CD4-positive, alpha-beta memory T cell (primary cell): ENCODE measurements at regions of chr11 and their contacts with region 1.

Region 1: GRCh38 chr11:128482512-128483191 is 104.7 kb downstream of the ETS1 start:
- DNase-seq: peak; percentile 68 to 88 (median 72)
- H3K4me3 ChIP-seq: peak overlapping the region; percentile 27 to 47
- H3K4me3 Mint-ChIP-seq: peak overlapping the region; percentile 73 to 92 (median 81)
- H3K27ac ChIP-seq: peak overlapping the region; percentile 94
- H3K27ac Mint-ChIP-seq: peak overlapping the region; percentile 88 to 99 (median 99)
- H3K4me1 ChIP-seq: peaks cover 99% of the 10 kb centered on the region
- H3K4me1 Mint-ChIP-seq: peaks cover 86 to 98% (median 93%) of the 10 kb centered on the region in 4 donors
- H3K27me3 ChIP-seq: no peaks in the 10 kb centered on the region
- H3K27me3 Mint-ChIP-seq: no peaks in the 10 kb centered on the region

Region 2: GRCh38 chr11:128463371-128463829 is 19.3 kb before region 1 on chr11:
- CTCF ChIA-PET with region 1: interaction called, 50 read pairs
- POLR2A ChIA-PET with region 1: interaction called, 662 read pairs
- intact Hi-C with region 1: loop called (anchors 2 kb)
- DNase-seq: no peak
- H3K4me3 ChIP-seq: peak overlapping the region in 1 of 2 donors; percentile 3
- H3K4me3 Mint-ChIP-seq: peak overlapping the region; percentile 26 to 93 (median 78)
- H3K27ac ChIP-seq: peak overlapping the region; percentile 94
- H3K27ac Mint-ChIP-seq: peak overlapping the region; percentile 98 to 99 (median 99)
- H3K4me1 ChIP-seq: peaks cover 93% of the 10 kb centered on the region
- H3K4me1 Mint-ChIP-seq: peaks cover 76 to 95% (median 86%) of the 10 kb centered on the region in 4 donors
- H3K27me3 ChIP-seq: no peaks in the 10 kb centered on the region
- H3K27me3 Mint-ChIP-seq: no peaks in the 10 kb centered on the region

Region 3: DNA sequence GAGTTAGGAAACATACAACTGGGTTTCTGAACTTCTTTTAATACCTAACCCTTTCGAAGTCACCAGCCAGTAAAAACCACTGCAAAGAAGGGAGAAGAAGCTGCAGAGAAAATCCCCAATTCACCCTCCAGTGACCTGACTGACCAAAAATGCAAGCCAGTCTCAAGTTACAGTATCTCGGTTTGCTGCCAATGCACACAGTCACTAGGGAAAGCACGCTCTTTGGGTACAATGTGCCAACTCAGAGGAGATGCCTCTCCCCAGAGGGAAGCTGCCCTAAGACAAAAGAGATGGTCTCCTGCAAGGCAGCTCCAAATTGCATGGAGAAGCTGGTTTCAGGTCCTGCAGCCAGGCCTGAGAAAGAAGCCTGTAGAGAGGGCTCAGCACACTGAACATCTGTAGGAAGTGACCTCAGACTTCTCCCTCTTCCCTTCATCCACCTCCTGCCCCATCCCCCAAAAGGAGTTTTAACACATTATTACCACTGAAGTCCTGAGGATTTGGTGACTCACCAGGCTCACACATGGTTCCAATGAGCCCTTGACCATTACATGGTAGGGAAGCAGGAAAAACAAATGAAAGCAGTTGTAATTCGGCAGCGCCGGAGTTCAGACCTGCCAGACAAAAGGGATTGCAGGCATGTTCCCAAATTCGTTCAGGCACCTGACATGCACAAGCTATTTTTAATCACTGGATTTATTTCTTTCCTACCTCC is 14.6 kb after region 1 on chr11:
- CTCF ChIA-PET with region 1: interaction called, 8 read pairs
- POLR2A ChIA-PET with region 1: interaction called, 1,488 read pairs
- intact Hi-C with region 1: loop called (anchors 1 kb)
- DNase-seq: peak in 1 of 5 donors; percentile 65
- H3K4me3 ChIP-seq: peak overlapping the region; percentile 5 to 47
- H3K4me3 Mint-ChIP-seq: peak overlapping the region; percentile 78 to 97 (median 88)
- H3K27ac ChIP-seq: peak overlapping the region; percentile 89
- H3K27ac Mint-ChIP-seq: peak overlapping the region; percentile 82 to 99 (median 97)
- H3K4me1 ChIP-seq: peaks cover 99% of the 10 kb centered on the region
- H3K4me1 Mint-ChIP-seq: peaks cover 90 to 100% (median 95%) of the 10 kb centered on the region in 4 donors
- H3K27me3 ChIP-seq: no peaks in the 10 kb centered on the region
- H3K27me3 Mint-ChIP-seq: no peaks in the 10 kb centered on the region